Activated CD4-positive, alpha-beta T cell treated with anti-CD3 and anti-CD28 coated beads for 36 hours (primary cell): ENCODE measurements at regions of chr17 and their contacts with region 1.

Region 1: GRCh38 chr17:32006957-32007462 is at the start of gene LRRC37B:
- DNase-seq: peak; percentile 94
- ATAC-seq: peak; percentile 91
- H3K4me3 Mint-ChIP-seq: peak within 1 kb of the TSS; percentile 86
- H3K27ac Mint-ChIP-seq: peak within 1 kb of the TSS; percentile 90
- H3K4me1 Mint-ChIP-seq: peaks cover 26% of the 10 kb centered on the region
- H3K27me3 Mint-ChIP-seq: no peaks in the 10 kb centered on the region
- total RNA-seq, gene LRRC37B: 14.3 to 16.6 TPM

Region 2: GRCh38 chr17:31494259-31495021 is 512.6 kb before region 1 on chr17:
- CTCF ChIA-PET with region 1: no interaction called
- POLR2A ChIA-PET with region 1: no interaction called
- intact Hi-C with region 1: loop called in 1 of 2 experiments (anchors 5 kb)
- DNase-seq: peak; percentile 82
- ATAC-seq: peak; percentile 86
- H3K4me3 Mint-ChIP-seq: peak overlapping the region; percentile 58
- H3K27ac Mint-ChIP-seq: peak overlapping the region; percentile 97
- H3K4me1 Mint-ChIP-seq: peaks cover 91% of the 10 kb centered on the region
- H3K27me3 Mint-ChIP-seq: no peaks in the 10 kb centered on the region

Region 3: DNA sequence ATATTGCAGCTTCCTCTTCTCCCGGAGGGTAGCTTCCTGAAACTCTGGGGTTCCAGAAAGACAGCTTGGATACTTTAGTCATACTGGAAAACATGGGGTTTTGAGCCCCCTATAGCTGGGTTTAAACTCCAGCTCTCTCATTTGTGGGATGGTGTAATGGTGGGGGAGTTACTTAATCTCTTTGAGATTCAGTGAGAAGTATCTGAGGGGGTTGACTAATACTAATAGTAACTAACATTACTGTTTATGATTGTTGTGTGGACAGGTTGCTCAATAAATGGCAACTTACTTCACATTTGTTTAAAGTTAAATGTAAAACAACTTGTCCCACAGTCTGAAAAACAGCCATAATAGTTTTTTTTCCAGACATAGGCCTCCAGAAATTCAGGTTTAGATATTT is 75.3 kb before region 1 on chr17:
- CTCF ChIA-PET with region 1: interaction called, 4 read pairs
- POLR2A ChIA-PET with region 1: no interaction called
- intact Hi-C with region 1: loop called in 1 of 2 experiments (anchors 5 kb)
- DNase-seq: no peak
- ATAC-seq: no peak
- H3K4me3 Mint-ChIP-seq: no peak overlapping the region
- H3K27ac Mint-ChIP-seq: no peak overlapping the region
- H3K4me1 Mint-ChIP-seq: peaks cover 7% of the 10 kb centered on the region
- H3K27me3 Mint-ChIP-seq: no peaks in the 10 kb centered on the region

Region 4: DNA sequence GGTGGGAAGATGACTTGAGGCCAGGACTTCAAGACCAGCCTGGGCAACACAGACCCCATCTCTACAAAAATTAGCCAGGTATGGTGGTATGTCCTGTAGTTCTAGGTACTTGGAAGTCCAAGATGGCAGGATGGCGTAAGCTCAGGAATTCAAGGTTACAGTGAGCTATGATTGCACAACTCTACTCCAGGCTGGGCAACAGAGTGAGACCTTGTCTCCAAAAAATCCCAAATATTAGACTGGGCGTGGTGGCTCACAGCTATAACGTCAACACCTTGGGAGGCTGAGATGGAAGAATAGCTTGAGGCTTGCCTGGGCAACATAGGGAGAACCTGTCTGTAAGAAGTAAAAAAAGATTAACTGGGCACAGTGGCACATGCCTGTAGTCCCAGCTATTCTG is 39.4 kb before region 1 on chr17:
- CTCF ChIA-PET with region 1: no interaction called
- POLR2A ChIA-PET with region 1: no interaction called
- intact Hi-C with region 1: no loop called
- DNase-seq: no peak
- ATAC-seq: no peak
- H3K4me3 Mint-ChIP-seq: no peak overlapping the region
- H3K27ac Mint-ChIP-seq: no peak overlapping the region
- H3K4me1 Mint-ChIP-seq: peaks cover 6% of the 10 kb centered on the region
- H3K27me3 Mint-ChIP-seq: no peaks in the 10 kb centered on the region